Activated CD4-positive, alpha-beta memory T cell treated with anti-CD3 and anti-CD28 coated beads, Interleukin-2, amount 10 ng/mL, durations not matched to agents 7 days and 5 days (primary cell): ENCODE measurements at regions of chr2 and their contacts with region 1.

Region 1: GRCh38 chr2:190110131-190110530 is 47.6 kb upstream of the MSTN start:
- DNase-seq: no peak
- H3K4me3 Mint-ChIP-seq: no peak overlapping the region
- H3K27ac Mint-ChIP-seq: no peak overlapping the region
- H3K4me1 Mint-ChIP-seq: no peaks in the 10 kb centered on the region
- H3K27me3 Mint-ChIP-seq: peaks cover 14% of the 10 kb centered on the region

Region 2: DNA sequence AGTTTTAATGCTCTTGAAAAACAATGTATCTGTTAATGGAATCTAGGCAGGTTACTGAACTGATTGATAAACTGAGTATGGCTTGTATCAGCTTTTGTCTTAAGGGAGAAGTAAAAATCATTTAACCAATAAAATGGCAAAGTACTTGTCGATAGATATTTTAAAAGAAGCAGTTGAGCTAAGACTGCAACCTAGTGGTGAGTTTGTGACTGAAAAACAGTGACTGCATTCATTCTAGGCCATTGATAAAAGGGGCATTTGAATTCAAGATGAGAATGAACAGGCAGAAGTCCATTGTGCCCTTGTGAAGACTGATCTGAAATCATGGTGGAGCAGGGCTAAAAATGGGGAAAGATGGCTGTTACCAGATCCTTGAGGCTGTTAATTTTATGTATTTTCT is 11.8 kb after region 1 on chr2:
- CTCF ChIA-PET with region 1: no interaction called
- POLR2A ChIA-PET with region 1: no interaction called
- DNase-seq: no peak
- H3K4me3 Mint-ChIP-seq: no peak overlapping the region
- H3K27ac Mint-ChIP-seq: no peak overlapping the region
- H3K4me1 Mint-ChIP-seq: no peaks in the 10 kb centered on the region
- H3K27me3 Mint-ChIP-seq: no peaks in the 10 kb centered on the region

Region 3: DNA sequence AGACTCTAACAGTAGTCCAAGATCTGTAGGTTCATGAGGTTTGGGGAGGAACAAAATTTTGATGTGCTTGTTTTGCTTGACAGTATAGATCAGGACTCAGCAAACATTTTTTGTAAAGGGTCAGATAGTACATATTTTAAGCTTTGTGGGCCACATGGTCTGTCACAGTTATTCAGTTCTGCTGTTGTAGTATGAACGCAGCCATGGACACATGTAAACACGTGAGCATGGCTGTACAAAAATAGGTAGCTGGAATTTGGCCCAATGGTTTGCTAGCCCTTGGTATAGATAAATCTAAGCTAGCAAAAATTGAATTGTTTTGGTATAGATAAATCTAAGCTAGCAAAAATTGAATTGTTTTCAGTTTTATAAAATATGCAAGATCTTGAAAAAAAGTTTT is 89.0 kb after region 1 on chr2:
- CTCF ChIA-PET with region 1: interaction called, 10 read pairs
- POLR2A ChIA-PET with region 1: no interaction called
- DNase-seq: no peak
- H3K4me3 Mint-ChIP-seq: no peak overlapping the region
- H3K27ac Mint-ChIP-seq: no peak overlapping the region
- H3K4me1 Mint-ChIP-seq: no peaks in the 10 kb centered on the region
- H3K27me3 Mint-ChIP-seq: no peaks in the 10 kb centered on the region